PC-3 (cell line): ENCODE measurements at regions of chr3 and their contacts with region 1.

Region 1: GRCh38 chr3:120567370-120568201 is 28.6 kb upstream of the NDUFB4 start:
- DNase-seq: peak; percentile 70
- ATAC-seq: peak; percentile 86
- H3K4me3 ChIP-seq: peak overlapping the region; percentile 65
- H3K27ac ChIP-seq: no peak overlapping the region
- H3K4me1 ChIP-seq: peaks cover 9% of the 10 kb centered on the region; the same call in 1 of the 2 replicates
- H3K27me3 ChIP-seq: no peaks in the 10 kb centered on the region
- CTCF ChIP-seq: peak; percentile 86

Region 2: DNA sequence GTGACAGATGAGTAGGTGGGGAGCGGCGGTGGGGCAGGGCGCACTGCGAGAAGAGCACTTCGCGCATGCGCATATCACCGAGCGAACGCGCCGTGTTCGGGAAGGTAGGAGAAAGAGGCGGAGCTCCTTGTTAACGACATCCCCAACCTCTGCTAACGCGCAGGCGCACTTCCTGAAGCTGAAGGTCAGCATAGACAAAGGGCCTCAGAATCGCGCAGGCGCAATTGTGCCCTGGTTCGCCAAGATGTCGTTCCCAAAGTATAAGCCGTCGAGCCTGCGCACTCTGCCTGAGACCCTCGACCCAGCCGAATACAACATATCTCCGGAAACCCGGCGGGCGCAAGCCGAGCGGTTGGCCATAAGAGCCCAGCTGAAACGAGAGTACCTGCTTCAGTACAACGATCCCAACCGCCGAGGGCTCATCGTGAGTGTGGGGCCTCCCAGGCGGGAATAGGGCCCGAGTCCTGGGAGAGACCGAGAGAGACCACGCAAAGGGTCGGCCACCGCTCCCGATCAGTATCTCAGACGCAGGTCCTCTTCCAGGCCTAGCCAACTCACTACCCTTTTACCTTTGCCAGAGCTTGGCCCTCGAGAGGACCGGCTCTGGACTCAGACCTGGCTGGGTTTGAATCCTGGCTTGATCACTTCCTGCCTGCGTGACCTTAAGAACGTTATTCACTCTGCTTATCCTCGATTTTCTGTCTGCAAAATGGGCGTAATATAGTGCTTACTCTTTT is 28.7 kb after region 1 on chr3 and contains the start of gene NDUFB4:
- CTCF ChIA-PET with region 1: interaction called, 14 read pairs
- POLR2A ChIA-PET with region 1: interaction called, 3 read pairs
- intact Hi-C with region 1: no loop called
- DNase-seq: peak; percentile 100
- ATAC-seq: peak; percentile 98
- H3K4me3 ChIP-seq: peak within 1 kb of the TSS; percentile 93
- H3K27ac ChIP-seq: peak within 1 kb of the TSS; percentile 68
- H3K4me1 ChIP-seq: peaks cover 19% of the 10 kb centered on the region
- H3K27me3 ChIP-seq: no peaks in the 10 kb centered on the region
- CTCF ChIP-seq: no peak
- total RNA-seq, gene NDUFB4: 239 and 283 TPM in 2 replicates

Region 3: GRCh38 chr3:120763601-120764000 is 196.0 kb after region 1 on chr3:
- CTCF ChIA-PET with region 1: interaction called, 11 read pairs
- POLR2A ChIA-PET with region 1: no interaction called
- intact Hi-C with region 1: no loop called
- DNase-seq: no peak
- ATAC-seq: no peak
- H3K4me3 ChIP-seq: no peak overlapping the region
- H3K27ac ChIP-seq: no peak overlapping the region
- H3K4me1 ChIP-seq: peaks cover 20% of the 10 kb centered on the region
- H3K27me3 ChIP-seq: no peaks in the 10 kb centered on the region
- CTCF ChIP-seq: no peak

Region 4: DNA sequence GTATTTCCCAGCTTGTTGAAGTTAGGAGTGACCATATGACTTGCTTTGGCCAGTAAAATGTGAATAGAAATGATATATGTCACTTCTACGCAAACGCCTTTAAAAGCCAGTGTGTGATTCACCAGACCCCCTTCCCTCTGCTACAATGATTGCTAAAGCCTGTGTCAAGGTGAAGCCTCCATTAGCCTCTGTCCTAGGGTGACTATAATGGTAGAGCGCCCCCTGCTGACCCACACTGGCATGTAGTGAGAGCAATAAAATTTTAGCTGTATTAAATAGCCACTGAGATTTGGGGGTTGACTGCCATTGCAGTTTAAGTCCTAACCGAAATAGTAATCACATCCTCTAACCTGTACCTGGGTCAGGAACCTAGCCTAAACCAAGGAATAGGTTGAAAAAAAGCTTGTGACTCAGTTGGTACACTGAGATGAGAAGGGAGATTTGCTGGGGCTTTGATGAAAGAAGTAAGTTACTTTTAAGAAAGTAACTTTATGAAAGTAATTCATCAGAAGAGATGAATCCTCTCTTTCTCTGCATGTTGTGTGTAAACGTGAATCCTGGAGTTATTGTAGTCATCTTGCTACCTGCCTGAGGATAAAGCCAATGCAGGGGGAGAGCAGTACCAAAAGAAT is 227.5 kb after region 1 on chr3:
- CTCF ChIA-PET with region 1: interaction called, 20 read pairs
- POLR2A ChIA-PET with region 1: no interaction called
- intact Hi-C with region 1: no loop called
- DNase-seq: peak; percentile 93
- ATAC-seq: peak; percentile 65
- H3K4me3 ChIP-seq: no peak overlapping the region
- H3K27ac ChIP-seq: 0 out of 2 replicates have a peak overlapping the region, but pooled peaks have one; percentile 3
- H3K4me1 ChIP-seq: peaks cover 28% of the 10 kb centered on the region
- H3K27me3 ChIP-seq: no peaks in the 10 kb centered on the region
- CTCF ChIP-seq: peak; percentile 99